Activated CD4-positive, alpha-beta T cell treated with anti-CD3 and anti-CD28 coated beads for 36 hours (primary cell): ENCODE measurements at regions of chr7 and their contacts with region 1.

Region 1: GRCh38 chr7:104943502-104944343 is 70.3 kb upstream of the KMT2E start:
- DNase-seq: peak; percentile 87
- ATAC-seq: peak; percentile 68
- H3K4me3 Mint-ChIP-seq: peak overlapping the region; percentile 95
- H3K27ac Mint-ChIP-seq: peak overlapping the region; percentile 99
- H3K4me1 Mint-ChIP-seq: peaks cover 68% of the 10 kb centered on the region
- H3K27me3 Mint-ChIP-seq: no peaks in the 10 kb centered on the region

Region 2: DNA sequence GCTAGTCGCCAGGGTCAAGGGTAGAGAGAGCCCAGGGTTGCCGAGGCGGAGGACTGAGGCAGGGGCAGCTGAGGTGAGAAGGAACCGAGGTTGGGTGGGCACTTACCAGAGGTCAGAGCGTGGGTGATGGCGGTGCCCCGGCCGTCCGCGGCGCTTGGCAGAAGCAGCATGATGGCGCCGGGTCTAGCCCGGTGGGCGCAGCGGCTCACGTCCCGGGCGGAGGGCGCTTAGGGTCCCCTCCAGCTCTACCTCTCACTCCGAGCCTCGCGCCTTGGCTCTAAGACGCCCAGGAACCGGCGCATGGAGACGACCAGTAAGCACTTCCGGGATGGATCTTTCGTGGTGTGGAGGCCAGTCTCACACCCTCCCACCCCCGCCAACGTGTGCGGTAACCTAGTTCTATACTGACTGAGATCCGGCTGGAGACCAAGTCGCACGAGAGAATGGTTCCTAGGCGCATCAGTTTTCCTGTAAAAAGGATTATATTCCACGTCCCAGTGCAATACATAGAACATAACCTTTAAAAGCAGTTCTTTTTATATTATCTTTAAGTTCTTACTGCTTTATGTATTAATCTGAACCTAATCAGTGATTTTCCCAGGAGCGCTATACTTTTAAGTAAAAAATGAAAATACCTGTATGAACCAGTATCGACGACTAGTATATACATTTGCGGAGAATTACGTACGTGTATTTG is 1599.1 kb before region 1 on chr7 and contains the start of gene DNAJC2:
- CTCF ChIA-PET with region 1: no interaction called
- POLR2A ChIA-PET with region 1: no interaction called
- intact Hi-C with region 1: loop called in 1 of 2 experiments (anchors 5 kb)
- DNase-seq: peak; percentile 91
- ATAC-seq: peak; percentile 79
- H3K4me3 Mint-ChIP-seq: peak within 1 kb of the TSS; percentile 92
- H3K27ac Mint-ChIP-seq: peak within 1 kb of the TSS; percentile 99
- H3K4me1 Mint-ChIP-seq: peaks cover 60% of the 10 kb centered on the region
- H3K27me3 Mint-ChIP-seq: no peaks in the 10 kb centered on the region
- total RNA-seq, gene DNAJC2: 50.0 to 56.2 TPM

Region 3: GRCh38 chr7:104772405-104773345 is 171.0 kb before region 1 on chr7:
- CTCF ChIA-PET with region 1: no interaction called
- POLR2A ChIA-PET with region 1: no interaction called
- intact Hi-C with region 1: no loop called
- DNase-seq: no peak
- ATAC-seq: no peak
- H3K4me3 Mint-ChIP-seq: no peak overlapping the region
- H3K27ac Mint-ChIP-seq: no peak overlapping the region
- H3K4me1 Mint-ChIP-seq: no peaks in the 10 kb centered on the region
- H3K27me3 Mint-ChIP-seq: peaks cover 8% of the 10 kb centered on the region

Region 4: GRCh38 chr7:105268511-105269392 is 325.0 kb after region 1 on chr7:
- CTCF ChIA-PET with region 1: no interaction called
- POLR2A ChIA-PET with region 1: interaction called, 4 read pairs
- intact Hi-C with region 1: loop called in 1 of 2 experiments (anchors 1 kb)
- DNase-seq: no peak
- ATAC-seq: peak; percentile 65
- H3K4me3 Mint-ChIP-seq: peak overlapping the region; percentile 78
- H3K27ac Mint-ChIP-seq: peak overlapping the region; percentile 96
- H3K4me1 Mint-ChIP-seq: peaks cover 63% of the 10 kb centered on the region
- H3K27me3 Mint-ChIP-seq: no peaks in the 10 kb centered on the region

Region 5: GRCh38 chr7:105309235-105310169 is 365.8 kb after region 1 on chr7:
- CTCF ChIA-PET with region 1: no interaction called
- POLR2A ChIA-PET with region 1: no interaction called
- intact Hi-C with region 1: loop called in 1 of 2 experiments (anchors 5 kb)
- DNase-seq: peak; percentile 16
- ATAC-seq: peak; percentile 39
- H3K4me3 Mint-ChIP-seq: no peak overlapping the region
- H3K27ac Mint-ChIP-seq: peak overlapping the region; percentile 30
- H3K4me1 Mint-ChIP-seq: peaks cover 56% of the 10 kb centered on the region
- H3K27me3 Mint-ChIP-seq: no peaks in the 10 kb centered on the region

Region 6: DNA sequence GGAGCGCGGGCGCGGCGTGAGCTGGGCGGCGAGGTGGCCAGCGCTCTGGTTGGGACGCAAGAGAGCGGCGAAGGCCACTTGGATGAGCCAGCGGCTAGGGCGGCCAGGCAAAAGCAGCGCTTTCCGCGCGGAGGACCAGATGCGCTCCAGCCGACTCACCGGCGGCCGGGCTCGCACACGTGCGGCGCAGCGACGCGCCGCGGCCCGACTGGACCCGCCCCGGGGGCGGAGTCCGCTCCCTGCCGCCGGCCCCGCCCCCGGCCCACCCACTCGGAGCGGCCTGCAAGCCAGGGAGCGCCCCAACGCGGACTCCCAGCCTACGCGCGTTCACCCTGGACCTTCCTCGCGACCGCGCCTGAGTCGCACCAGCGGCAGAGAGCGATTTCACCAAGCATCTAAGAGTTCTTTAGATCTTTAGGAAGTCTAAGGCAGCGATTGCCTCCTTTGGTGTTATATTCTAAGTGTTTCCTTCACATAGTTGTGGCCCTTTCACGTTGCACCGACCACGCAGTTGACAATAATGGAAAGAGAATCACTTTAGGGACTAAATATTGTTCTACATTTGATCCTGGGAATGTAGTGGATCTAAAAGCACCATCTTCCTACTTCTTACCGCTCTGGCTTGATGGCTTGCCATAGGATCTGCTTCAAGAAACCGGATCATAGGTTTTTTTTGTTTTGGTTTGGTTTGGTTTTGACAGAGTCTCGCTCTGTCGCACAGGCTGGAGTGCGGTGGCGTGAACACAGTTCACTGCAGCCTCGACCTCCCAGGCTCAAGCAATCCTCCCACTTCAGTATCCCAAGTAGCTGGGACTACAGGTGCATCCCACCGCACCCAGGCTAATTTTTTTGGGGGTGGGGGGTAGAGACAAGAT is 578.6 kb after region 1 on chr7 and contains the start of gene PUS7:
- CTCF ChIA-PET with region 1: no interaction called
- POLR2A ChIA-PET with region 1: no interaction called
- intact Hi-C with region 1: loop called in 1 of 2 experiments (anchors 5 kb)
- DNase-seq: peak; percentile 91
- ATAC-seq: peak; percentile 89
- H3K4me3 Mint-ChIP-seq: peak within 1 kb of the TSS; percentile 92
- H3K27ac Mint-ChIP-seq: peak within 1 kb of the TSS; percentile 90
- H3K4me1 Mint-ChIP-seq: peaks cover 17% of the 10 kb centered on the region
- H3K27me3 Mint-ChIP-seq: no peaks in the 10 kb centered on the region
- total RNA-seq, gene PUS7: 31.9 to 33.8 TPM

Region 7: GRCh38 chr7:106112117-106112971 is 1168.6 kb after region 1 on chr7 and contains the start of gene SYPL1:
- CTCF ChIA-PET with region 1: no interaction called
- POLR2A ChIA-PET with region 1: no interaction called
- intact Hi-C with region 1: loop called in 1 of 2 experiments (anchors 10 kb)
- DNase-seq: peak; percentile 95
- ATAC-seq: peak; percentile 86
- H3K4me3 Mint-ChIP-seq: peak within 1 kb of the TSS; percentile 79
- H3K27ac Mint-ChIP-seq: peak within 1 kb of the TSS; percentile 89
- H3K4me1 Mint-ChIP-seq: peaks cover 64% of the 10 kb centered on the region
- H3K27me3 Mint-ChIP-seq: no peaks in the 10 kb centered on the region
- total RNA-seq, gene SYPL1: 23.7 to 28.8 TPM